OCI-LY7 (cell line): ENCODE measurements at regions of chr17 and their contacts with region 1.

Region 1: DNA sequence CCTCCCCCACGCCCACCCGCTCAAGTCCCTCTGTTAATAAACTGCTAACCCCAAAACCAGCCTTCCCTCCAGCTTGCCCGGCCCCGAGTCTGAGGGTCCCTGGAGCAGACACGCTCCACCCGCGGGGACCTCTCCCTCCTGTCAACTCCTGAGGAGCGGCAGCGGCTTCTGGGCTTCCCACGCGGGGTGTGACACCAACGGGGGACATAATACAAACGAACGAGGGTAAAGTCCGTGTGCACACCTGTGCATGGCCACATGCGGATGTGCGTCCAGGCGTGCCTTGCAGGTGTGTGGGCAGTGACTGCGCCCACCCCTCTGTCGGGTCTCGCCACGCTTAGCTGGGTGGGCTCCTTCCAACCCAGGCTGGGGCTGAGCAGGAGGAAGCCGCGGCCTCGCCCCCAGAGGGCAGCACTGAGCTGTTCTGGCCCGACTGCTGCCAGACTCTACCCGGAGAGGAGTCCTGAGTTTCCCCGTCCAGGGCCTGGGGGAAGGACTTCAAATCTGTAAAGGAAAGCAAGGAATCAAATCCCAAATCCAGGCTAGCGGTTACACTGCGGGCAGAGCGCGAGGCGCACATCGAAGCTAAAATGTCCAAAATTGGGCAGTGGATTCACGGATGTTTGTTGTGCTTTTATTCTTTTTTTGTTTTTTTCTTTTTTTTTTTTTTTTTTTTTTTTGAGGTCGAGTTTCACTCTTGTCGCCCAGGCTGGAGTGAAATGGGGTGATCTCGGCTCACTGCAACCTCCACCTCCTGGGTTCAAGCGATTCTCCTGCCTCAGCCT is 24.2 kb upstream of the KRT17 start:
- DNase-seq: peak; percentile 88
- H3K4me3 ChIP-seq: peak overlapping the region; percentile 60
- H3K27ac ChIP-seq: no peak overlapping the region
- H3K4me1 ChIP-seq: peaks cover 10% of the 10 kb centered on the region
- CTCF ChIP-seq: peak; percentile 90

Region 2: DNA sequence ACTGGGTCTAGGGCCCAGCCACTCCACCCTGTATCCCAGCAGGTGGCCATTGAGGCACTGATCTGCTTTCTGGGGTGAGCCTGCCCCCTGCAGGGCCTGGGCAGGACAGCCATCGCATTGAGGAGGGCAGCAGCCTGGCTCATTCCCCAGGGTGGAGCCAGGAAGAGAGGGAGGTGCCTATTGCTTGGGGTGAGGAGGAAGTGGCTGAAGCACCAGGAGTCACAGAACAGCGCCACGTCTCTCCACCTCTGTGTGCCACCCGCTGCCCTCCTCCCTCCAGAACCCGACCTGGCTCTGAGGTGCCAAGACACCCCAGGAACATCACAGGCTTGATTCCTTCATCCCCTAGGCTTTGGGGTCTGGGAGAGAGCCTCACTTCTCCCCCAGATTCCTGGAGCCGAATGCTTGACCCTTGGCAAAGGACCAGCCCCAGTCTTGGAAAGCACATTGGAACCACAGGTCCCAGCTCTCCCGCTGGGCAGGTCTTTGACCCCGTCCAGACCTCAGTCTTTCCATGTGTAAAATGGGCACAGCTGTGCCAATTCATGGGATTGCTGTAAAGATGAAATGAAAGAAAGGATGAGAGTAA is 151.7 kb before region 1 on chr17:
- CTCF ChIA-PET with region 1: no interaction called
- POLR2A ChIA-PET with region 1: no interaction called
- intact Hi-C with region 1: loop called (anchors 5 kb)
- DNase-seq: peak; percentile 67
- H3K4me3 ChIP-seq: no peak overlapping the region
- H3K27ac ChIP-seq: no peak overlapping the region
- H3K4me1 ChIP-seq: no peaks in the 10 kb centered on the region
- CTCF ChIP-seq: peak; percentile 76

Region 3: GRCh38 chr17:41548844-41549595 is 99.6 kb before region 1 on chr17:
- CTCF ChIA-PET with region 1: interaction called, 9 read pairs
- POLR2A ChIA-PET with region 1: interaction called, 5 read pairs
- intact Hi-C with region 1: loop called (anchors 1 kb)
- DNase-seq: peak; percentile 75
- H3K4me3 ChIP-seq: no peak overlapping the region
- H3K27ac ChIP-seq: no peak overlapping the region
- H3K4me1 ChIP-seq: no peaks in the 10 kb centered on the region
- CTCF ChIP-seq: peak; percentile 96

Region 4: GRCh38 chr17:41658846-41659245 is 10.2 kb after region 1 on chr17:
- CTCF ChIA-PET with region 1: interaction called, 26 read pairs
- POLR2A ChIA-PET with region 1: no interaction called
- intact Hi-C with region 1: loop called (anchors 1 kb)
- DNase-seq: no peak
- H3K4me3 ChIP-seq: no peak overlapping the region
- H3K27ac ChIP-seq: no peak overlapping the region
- H3K4me1 ChIP-seq: peaks cover 3% of the 10 kb centered on the region
- CTCF ChIP-seq: no peak